ENCODE measurements at regions of chr20 and their contacts with region 1.

Region 1: DNA sequence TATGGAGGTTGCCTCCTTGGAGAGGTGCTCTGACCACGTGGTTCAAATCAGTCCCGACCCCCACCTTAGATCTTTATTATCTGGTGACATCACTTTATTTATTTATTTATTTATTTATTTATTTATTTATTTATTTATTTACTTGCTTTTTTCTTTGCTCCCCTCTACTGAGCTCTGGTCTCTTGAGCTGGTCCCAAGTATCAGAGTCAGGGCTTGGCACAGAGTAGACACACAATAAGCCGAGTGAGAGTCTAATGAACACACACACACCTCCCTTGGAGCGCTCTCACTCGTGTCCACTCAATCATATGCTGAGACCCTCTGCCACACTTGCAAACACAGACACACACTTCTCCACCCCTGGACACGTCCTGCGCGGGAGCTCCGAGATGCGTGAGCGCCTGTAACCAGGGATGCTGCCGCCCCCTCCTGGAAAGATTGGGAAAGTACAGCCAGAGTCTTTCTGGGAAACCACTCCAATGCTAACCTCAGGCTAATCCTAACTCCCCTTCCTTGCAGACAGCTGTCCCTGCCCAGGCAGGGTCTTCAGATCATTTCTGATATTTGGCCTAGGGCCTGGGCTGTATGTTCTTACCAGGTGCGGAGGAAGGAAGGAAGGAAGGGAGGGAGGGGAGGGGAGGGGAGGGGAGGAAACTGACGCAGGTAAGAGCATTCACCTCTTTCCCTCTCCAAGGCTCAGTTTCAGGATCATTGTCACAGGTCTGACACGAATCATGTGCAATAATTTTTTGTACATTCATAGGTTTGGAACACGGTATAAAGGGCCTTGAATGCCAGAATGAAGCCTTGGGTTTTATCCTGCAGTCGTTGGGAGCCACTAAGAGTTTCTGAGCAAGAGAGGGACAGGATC is 70.9 kb downstream of the STK35 start:
- DNase-seq: no peak
- H3K4me3 ChIP-seq: no peak overlapping the region
- CTCF ChIP-seq: peak; percentile 91

Region 2: GRCh38 chr20:1965520-1966351 is 206.8 kb before region 1 on chr20:
- CTCF ChIA-PET with region 1: interaction called, 104 read pairs
- POLR2A ChIA-PET with region 1: no interaction called
- DNase-seq: no peak
- H3K4me3 ChIP-seq: peak overlapping the region; percentile 24
- CTCF ChIP-seq: peak; percentile 95

Region 3: DNA sequence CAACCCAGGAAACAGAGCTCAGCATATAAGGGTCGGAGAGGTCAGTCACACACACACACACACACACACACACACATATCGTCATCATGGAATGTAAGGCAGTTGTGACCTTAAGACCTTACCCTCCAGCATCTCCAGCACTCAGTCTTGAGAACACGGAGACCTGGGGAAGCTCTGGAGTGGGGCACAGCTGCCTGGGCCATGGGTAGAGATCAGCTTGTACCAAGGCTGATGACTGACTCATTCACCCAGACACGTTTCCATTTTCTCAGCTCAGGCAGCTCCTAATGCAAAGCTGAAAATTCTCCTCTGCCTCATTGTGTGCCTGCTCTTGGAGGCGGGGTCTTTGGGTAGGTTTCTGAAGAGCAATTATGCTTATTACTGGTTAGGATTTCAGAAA is 140.4 kb before region 1 on chr20:
- CTCF ChIA-PET with region 1: interaction called, 10 read pairs
- POLR2A ChIA-PET with region 1: no interaction called
- DNase-seq: no peak
- H3K4me3 ChIP-seq: no peak overlapping the region
- CTCF ChIP-seq: no peak

Region 4: GRCh38 chr20:2156666-2157624 is 15.6 kb before region 1 on chr20:
- CTCF ChIA-PET with region 1: interaction called, 20 read pairs
- POLR2A ChIA-PET with region 1: no interaction called
- DNase-seq: no peak
- H3K4me3 ChIP-seq: no peak overlapping the region
- CTCF ChIP-seq: no peak

Region 5: DNA sequence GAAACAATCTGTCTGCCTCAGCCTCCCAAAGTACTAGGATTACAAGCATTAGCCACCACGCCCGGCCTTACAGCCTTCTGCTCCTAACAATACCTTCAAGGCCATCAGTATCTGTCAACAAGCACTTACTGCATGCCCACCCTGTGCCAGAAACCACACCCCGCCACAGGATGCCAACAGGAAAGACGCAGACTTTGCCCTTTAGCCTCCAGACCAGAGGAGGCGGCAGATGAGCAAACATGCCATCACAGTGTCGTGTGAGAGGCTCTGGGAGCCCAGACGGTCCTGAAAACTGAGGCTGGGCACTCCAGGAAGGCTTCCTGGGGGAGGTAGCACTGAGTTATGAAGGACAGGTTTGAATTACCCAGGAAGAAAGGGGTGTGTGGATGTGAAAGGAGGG is 88.6 kb after region 1 on chr20:
- CTCF ChIA-PET with region 1: no interaction called
- POLR2A ChIA-PET with region 1: no interaction called
- DNase-seq: no peak
- H3K4me3 ChIP-seq: no peak overlapping the region
- CTCF ChIP-seq: no peak

Region 6: GRCh38 chr20:2421247-2421646 is 248.7 kb after region 1 on chr20:
- CTCF ChIA-PET with region 1: no interaction called
- POLR2A ChIA-PET with region 1: no interaction called
- DNase-seq: no peak
- H3K4me3 ChIP-seq: no peak overlapping the region
- CTCF ChIP-seq: no peak